KBM-7 (cell line): ENCODE measurements at regions of chr1 and their contacts with region 1.

Region 1: DNA sequence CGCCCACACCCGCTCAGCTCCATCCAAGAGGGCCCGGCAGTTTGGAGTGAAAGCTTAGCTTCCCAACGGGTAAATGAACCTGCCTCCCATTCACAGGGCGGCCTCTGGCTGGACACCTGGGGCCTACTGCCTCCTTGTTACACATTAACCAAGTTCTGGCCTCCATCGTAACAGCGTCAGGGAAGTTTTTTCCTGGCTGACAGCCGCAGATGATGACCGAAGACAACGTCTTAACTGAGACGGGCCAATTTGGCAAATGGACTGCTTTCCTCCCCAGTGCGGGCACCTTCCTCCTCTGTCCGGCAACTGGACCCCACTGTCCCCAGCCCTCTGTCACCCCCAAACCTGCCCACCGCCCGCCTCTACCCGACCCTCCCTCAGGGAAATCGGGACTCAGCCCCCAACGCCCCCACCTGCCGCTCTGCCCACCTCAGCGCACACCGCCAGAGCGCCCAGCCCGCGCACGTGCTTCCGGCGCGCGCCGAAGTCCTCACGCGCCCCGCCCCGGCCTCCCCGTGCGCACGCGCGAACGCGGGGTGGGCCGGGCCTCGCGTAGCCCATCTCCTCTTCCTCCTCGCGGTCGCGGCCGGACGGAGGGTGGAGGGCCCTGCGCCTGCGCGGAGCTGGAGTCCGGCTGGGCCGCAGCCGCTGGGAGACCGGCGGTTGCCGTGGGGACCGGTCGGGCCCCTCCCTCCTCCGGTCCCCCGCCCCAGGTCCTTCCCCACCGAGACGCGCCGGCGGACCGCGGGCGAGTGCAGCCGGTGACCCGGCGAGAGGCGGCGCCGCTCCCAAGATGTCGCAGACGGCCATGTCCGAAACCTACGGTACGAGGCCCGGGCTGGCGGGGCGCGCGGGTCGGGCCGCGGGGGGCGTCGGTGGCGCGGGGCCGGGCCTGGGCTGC is at the start of gene RAB4A:
- DNase-seq: peak; percentile 86

Region 2: DNA sequence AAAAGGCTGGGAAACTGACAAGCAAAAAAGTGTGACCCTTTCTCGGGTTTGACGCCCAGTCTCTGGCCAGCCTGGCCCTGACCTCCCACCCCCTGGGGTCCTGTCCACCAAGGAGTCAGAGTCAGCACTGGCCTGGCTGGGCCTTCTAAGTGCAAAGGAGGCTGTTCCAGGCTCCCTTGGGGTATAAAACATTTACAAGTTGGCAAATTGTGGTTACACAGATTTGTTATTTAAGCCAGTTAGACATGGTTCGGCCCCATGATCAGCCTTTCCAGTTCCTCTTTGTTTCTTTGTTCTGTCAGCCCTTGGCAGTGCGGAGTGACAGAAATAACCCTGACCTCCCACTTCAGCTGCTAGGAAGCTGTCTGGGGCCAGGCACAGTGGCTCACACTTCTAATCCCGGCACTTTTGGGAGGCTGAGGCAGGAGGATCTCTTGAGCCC is 161.5 kb before region 1 on chr1:
- in situ Hi-C with region 1: no loop called
- DNase-seq: peak; percentile 26

Region 3: DNA sequence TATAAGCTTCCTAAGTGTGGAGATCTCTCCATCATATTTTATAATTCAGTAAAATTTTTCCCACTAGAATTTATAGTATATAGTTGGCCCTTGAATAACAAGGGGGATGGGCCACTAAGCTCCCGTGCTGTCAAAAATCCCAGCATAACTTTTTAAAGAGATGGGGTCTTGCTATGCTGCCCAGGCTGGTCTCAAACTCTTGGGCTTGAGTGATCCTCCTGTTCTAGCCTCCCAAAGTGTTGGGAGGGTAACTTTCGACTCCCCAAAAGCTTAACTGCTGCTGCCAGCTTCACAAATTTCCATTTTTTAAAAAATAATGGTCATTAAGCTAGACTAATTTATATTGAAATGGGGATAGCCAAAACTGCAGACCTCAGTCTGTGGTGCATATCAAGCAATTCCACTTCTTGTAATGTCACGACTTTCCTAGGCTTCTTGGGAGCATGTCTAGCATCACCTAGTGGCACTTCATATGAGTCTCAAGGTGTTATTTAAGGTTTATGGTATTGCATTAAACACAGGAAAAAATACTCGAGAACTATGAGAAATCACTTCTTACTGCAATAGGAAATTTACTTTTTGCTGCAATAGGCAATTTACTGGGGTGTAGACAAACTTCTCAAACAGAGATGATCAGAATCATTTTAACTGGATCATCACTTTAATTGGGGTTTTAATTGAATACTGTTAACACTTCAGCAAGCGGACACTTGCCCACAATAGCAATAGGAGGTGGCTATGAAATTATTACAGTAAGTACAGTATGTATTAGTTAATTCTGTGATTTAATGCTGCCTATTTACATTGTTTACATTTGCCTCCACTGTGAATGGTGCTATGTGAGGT is 182.4 kb after region 1 on chr1:
- in situ Hi-C with region 1: loop called (anchors 25 kb)
- DNase-seq: peak; percentile 14

Region 4: GRCh38 chr1:230310381-230311163 is 1039.8 kb after region 1 on chr1:
- in situ Hi-C with region 1: loop called (anchors 25 kb)
- DNase-seq: peak; percentile 74